ENCODE measurements at regions of chr2 and their contacts with region 1.

Region 1: GRCh38 chr2:54558188-54559005 is 102.3 kb downstream of the SPTBN1 start:
- DNase-seq: peak; percentile 46 to 53
- ATAC-seq: peak; percentile 32 to 65 (median 48)
- H3K4me3 ChIP-seq: peak overlapping the region in 9 of 10 donors; percentile 33 to 68 (median 50)
- H3K27ac ChIP-seq: peak overlapping the region; percentile 39 to 94 (median 83)
- H3K4me1 ChIP-seq: peaks cover 17 to 98% (median 90%) of the 10 kb centered on the region in 9 donors
- H3K27me3 ChIP-seq: no peaks in the 10 kb centered on the region
- CTCF ChIP-seq: no peak

Region 2: DNA sequence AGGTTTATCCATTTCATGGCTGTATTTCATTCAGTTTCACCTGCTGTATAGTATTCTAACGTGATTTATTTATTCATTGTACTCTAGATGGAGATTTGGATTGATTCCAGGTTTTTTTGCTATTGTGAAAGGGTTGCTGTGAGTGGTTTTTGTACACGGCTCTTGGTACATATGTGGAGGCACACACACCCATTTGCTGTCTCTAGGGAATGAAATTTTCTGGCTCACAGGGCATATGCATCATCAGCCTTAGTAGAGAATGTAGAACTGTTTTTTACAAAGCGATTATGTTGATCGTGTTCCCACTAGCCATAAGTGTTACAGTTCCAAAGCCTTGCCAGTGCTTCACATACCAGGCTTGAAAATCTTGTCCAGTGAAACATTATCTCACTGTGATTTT is 97.1 kb before region 1 on chr2:
- intact Hi-C with region 1: loop called in 1 of 10 experiments (anchors 5 kb)
- DNase-seq: no peak
- ATAC-seq: peak in 5 of 8 donors; percentile 11 to 50 (median 41)
- H3K4me3 ChIP-seq: peak overlapping the region in 2 of 10 donors; percentile 0 to 79
- H3K27ac ChIP-seq: peak overlapping the region in 9 of 10 donors; percentile 30 to 98 (median 75)
- H3K4me1 ChIP-seq: peaks cover 12 to 85% (median 72%) of the 10 kb centered on the region in 9 donors
- H3K27me3 ChIP-seq: peaks cover 0 to 30% (median 0%) of the 10 kb centered on the region in 7 donors
- CTCF ChIP-seq: no peak

Region 3: GRCh38 chr2:54545702-54546450 is 12.5 kb before region 1 on chr2:
- intact Hi-C with region 1: no loop called
- DNase-seq: no peak
- ATAC-seq: peak in 1 of 8 donors; percentile 32
- H3K4me3 ChIP-seq: no peak overlapping the region
- H3K27ac ChIP-seq: peak overlapping the region in 3 of 10 donors; percentile 17 to 38 (median 24)
- H3K4me1 ChIP-seq: peaks cover 23 to 95% (median 88%) of the 10 kb centered on the region in 9 donors
- H3K27me3 ChIP-seq: no peaks in the 10 kb centered on the region
- CTCF ChIP-seq: no peak

Region 4: DNA sequence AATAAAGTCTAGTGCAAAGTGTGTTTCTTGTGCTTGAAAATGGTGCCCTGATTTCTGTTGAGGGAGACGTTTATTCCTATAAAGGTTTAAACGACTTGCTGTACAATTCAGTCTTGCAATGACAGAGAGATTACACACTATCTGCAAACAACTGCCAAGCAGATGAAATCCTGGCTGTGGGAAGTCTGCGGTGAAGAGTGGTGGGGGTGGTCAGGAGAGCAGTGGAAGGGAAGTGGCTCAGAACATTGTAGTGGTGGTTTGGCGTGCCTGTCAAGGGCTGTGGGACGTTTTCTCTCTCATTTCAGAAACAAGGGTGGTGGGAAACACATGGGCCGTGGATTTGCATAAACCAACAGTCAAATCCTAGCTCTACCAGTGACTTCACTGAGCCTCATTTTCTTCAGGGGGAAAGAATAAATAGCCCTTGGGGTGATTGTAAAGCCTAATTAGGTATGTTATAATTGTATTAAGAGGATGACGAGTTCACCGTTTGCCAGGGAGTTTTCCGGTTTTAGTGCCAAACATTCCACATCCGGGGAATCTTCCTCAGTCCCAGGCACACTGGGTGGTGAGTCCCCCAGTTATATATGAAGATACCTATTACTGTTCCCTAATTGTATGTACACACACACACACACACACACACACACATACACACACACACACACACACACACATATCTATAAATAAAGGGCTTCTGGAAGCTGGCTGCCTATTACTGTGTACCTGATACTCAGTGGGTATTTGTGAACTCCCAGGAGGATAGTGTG is 12.7 kb after region 1 on chr2:
- intact Hi-C with region 1: loop called in 1 of 10 experiments (anchors 2 kb)
- DNase-seq: peak in 1 of 2 donors; percentile 61
- ATAC-seq: peak; percentile 31 to 68 (median 52)
- H3K4me3 ChIP-seq: peak overlapping the region in 1 of 10 donors; percentile 0
- H3K27ac ChIP-seq: peak overlapping the region in 9 of 10 donors; percentile 59 to 89 (median 78)
- H3K4me1 ChIP-seq: peaks cover 54 to 99% (median 95%) of the 10 kb centered on the region in 9 donors
- H3K27me3 ChIP-seq: no peaks in the 10 kb centered on the region
- CTCF ChIP-seq: no peak

Region 5: DNA sequence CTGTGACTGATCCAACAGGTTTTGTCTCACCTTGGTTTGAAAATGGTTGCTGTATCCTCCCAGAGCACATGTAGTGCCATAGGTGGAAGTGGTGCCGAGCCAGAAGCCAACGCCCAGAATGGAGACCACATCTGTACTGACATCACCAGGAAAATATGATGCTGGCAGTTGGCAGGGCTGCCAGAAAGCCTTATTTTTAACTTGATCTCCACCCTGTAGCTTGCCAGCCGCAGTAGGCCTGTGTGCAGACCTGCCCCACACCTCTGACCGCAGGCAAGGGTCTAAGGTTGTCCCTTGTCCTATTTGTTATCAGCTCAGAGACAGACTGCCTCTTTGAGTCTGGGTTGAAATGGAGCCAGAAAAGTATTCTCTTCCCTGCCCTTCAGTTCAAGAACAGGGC is 41.5 kb after region 1 on chr2:
- intact Hi-C with region 1: loop called in 3 of 10 experiments (anchors 2 to 10 kb)
- DNase-seq: peak; percentile 58 to 74
- ATAC-seq: peak; percentile 14 to 65 (median 50)
- H3K4me3 ChIP-seq: no peak overlapping the region
- H3K27ac ChIP-seq: peak overlapping the region; percentile 26 to 89 (median 75)
- H3K4me1 ChIP-seq: peaks cover 72 to 100% (median 100%) of the 10 kb centered on the region in 9 donors
- H3K27me3 ChIP-seq: no peaks in the 10 kb centered on the region
- CTCF ChIP-seq: no peak

Region 6: DNA sequence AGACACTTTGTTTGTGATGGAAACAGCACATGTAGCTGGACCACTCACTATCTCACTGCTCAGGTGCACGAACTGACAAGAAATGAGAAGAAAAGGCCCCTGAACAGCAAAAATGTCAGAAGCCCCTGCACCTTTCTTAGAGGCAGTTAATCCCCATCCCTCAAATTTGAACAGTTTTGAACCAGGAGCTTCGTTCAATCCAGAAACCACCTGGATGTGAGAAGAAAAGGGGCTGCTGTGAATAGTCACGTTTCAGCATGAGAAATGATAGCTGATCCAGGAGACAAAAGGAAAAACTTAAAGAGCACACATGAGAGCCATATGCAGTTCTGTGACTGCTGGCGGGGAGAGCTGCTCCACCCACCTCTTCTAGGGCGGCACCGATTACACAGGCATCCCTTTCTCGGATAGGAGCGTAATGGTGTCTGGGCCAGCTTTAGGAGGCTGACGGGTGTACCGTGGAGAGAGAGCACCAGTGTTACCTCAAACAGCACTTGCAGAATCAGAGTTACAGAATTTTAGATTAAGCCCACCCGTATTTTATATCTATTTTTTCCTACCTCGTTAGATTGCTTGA is 48.1 kb after region 1 on chr2:
- intact Hi-C with region 1: loop called in 3 of 10 experiments (anchors 2 to 10 kb)
- DNase-seq: peak in 1 of 2 donors; percentile 62
- ATAC-seq: peak; percentile 47 to 80 (median 68)
- H3K4me3 ChIP-seq: no peak overlapping the region
- H3K27ac ChIP-seq: peak overlapping the region in 9 of 10 donors; percentile 52 to 89 (median 77)
- H3K4me1 ChIP-seq: peaks cover 47 to 100% (median 99%) of the 10 kb centered on the region in 9 donors
- H3K27me3 ChIP-seq: no peaks in the 10 kb centered on the region
- CTCF ChIP-seq: no peak

Region 7: DNA sequence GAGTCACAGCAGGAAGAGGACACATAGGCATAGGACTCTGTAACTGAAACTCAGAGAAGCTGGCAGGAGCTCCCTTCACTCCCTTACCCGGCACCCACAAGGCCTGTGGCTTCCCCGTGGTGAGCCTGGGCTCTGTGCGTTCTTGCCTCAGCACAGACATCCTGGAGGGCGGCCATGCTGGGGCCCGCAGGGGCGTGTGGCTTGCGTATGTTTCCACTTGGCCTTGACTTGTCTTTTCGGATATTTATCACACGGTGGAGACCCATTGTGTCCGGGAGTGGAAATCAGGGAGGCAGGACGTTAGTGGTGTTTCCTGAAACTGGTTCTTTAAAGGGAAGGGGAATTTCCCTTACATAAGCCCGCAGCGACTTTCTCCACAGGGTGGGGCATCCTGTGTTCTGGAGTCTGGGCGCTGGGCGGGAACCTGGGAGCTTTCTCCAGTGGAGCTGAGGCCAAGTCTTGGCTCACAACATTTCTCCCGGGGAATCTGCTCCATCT is 115.2 kb after region 1 on chr2:
- intact Hi-C with region 1: loop called in 1 of 10 experiments (anchors 5 kb)
- DNase-seq: peak; percentile 86 to 94
- ATAC-seq: peak; percentile 82 to 93 (median 90)
- H3K4me3 ChIP-seq: peak overlapping the region in 6 of 10 donors; percentile 4 to 33 (median 16)
- H3K27ac ChIP-seq: peak overlapping the region; percentile 74 to 98 (median 90)
- H3K4me1 ChIP-seq: peaks cover 13 to 65% (median 55%) of the 10 kb centered on the region in 9 donors
- H3K27me3 ChIP-seq: no peaks in the 10 kb centered on the region
- CTCF ChIP-seq: peak in 1 of 9 donors; percentile 18

Region 8: GRCh38 chr2:54685263-54685775 is 126.9 kb after region 1 on chr2:
- intact Hi-C with region 1: no loop called
- DNase-seq: no peak
- ATAC-seq: no peak
- H3K4me3 ChIP-seq: no peak overlapping the region
- H3K27ac ChIP-seq: no peak overlapping the region
- H3K4me1 ChIP-seq: peaks cover 0 to 11% (median 4%) of the 10 kb centered on the region in 9 donors
- H3K27me3 ChIP-seq: no peaks in the 10 kb centered on the region
- CTCF ChIP-seq: no peak

Measured in heart right ventricle (tissue), 16 donors.